Activated CD4-positive, alpha-beta memory T cell treated with anti-CD3 and anti-CD28 coated beads for 36 hours (primary cell): ENCODE measurements at regions of chr16 and their contacts with region 1.

Region 1: DNA sequence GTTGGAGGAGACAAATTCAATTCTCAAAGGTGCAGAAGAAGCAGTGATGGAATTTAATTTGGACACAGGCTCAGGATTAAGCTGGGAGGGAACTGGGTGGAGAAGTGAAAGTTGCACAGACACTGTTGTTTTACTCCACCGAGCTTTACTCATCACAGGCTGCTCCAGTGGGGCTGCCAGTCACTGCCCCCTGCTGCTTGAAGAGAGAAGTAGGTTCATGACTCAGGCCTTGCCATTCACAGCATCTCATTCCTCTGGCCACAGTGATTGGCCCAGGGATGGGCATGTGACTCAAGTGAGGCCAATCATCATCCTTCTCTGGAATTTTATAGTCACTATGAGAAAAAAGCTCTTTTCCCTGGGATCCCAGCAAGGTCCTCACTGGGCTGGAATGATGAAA is 11.8 kb downstream of the GNAO1 start:
- DNase-seq: peak; percentile 80
- H3K4me3 Mint-ChIP-seq: no peak overlapping the region
- H3K27ac Mint-ChIP-seq: no peak overlapping the region
- H3K4me1 Mint-ChIP-seq: no peaks in the 10 kb centered on the region
- H3K27me3 Mint-ChIP-seq: no peaks in the 10 kb centered on the region

Region 2: GRCh38 chr16:55756963-55757362 is 446.1 kb before region 1 on chr16:
- CTCF ChIA-PET with region 1: no interaction called
- POLR2A ChIA-PET with region 1: no interaction called
- intact Hi-C with region 1: loop called (anchors 2 kb)
- DNase-seq: no peak
- H3K4me3 Mint-ChIP-seq: no peak overlapping the region
- H3K27ac Mint-ChIP-seq: no peak overlapping the region
- H3K4me1 Mint-ChIP-seq: peaks cover 25% of the 10 kb centered on the region
- H3K27me3 Mint-ChIP-seq: peaks cover 10% of the 10 kb centered on the region

Region 3: GRCh38 chr16:56041686-56042085 is 161.4 kb before region 1 on chr16:
- CTCF ChIA-PET with region 1: interaction called, 12 read pairs
- POLR2A ChIA-PET with region 1: no interaction called
- intact Hi-C with region 1: loop called (anchors 2 kb)
- DNase-seq: peak; percentile 41
- H3K4me3 Mint-ChIP-seq: no peak overlapping the region
- H3K27ac Mint-ChIP-seq: no peak overlapping the region
- H3K4me1 Mint-ChIP-seq: no peaks in the 10 kb centered on the region
- H3K27me3 Mint-ChIP-seq: peaks cover 1% of the 10 kb centered on the region

Region 4: GRCh38 chr16:56191156-56191815 is 11.8 kb before region 1 on chr16 and contains the start of gene GNAO1:
- CTCF ChIA-PET with region 1: interaction called, 10 read pairs
- POLR2A ChIA-PET with region 1: interaction called, 3 read pairs
- intact Hi-C with region 1: loop called (anchors 1 kb)
- DNase-seq: peak; percentile 65
- H3K4me3 Mint-ChIP-seq: peak within 1 kb of the TSS; percentile 69
- H3K27ac Mint-ChIP-seq: no peak within 1 kb of the TSS
- H3K4me1 Mint-ChIP-seq: peaks cover 32% of the 10 kb centered on the region
- H3K27me3 Mint-ChIP-seq: peaks cover 52% of the 10 kb centered on the region
- total RNA-seq, gene GNAO1: 1.3 to 1.4 TPM

Region 5: GRCh38 chr16:56317998-56318826 is 115.2 kb after region 1 on chr16:
- CTCF ChIA-PET with region 1: interaction called, 8 read pairs
- POLR2A ChIA-PET with region 1: no interaction called
- intact Hi-C with region 1: loop called (anchors 2 kb)
- DNase-seq: peak; percentile 87
- H3K4me3 Mint-ChIP-seq: no peak overlapping the region
- H3K27ac Mint-ChIP-seq: no peak overlapping the region
- H3K4me1 Mint-ChIP-seq: peaks cover 3% of the 10 kb centered on the region
- H3K27me3 Mint-ChIP-seq: no peaks in the 10 kb centered on the region

Region 6: GRCh38 chr16:56460101-56460500 is 257.0 kb after region 1 on chr16:
- CTCF ChIA-PET with region 1: no interaction called
- POLR2A ChIA-PET with region 1: no interaction called
- intact Hi-C with region 1: no loop called
- DNase-seq: no peak
- H3K4me3 Mint-ChIP-seq: no peak overlapping the region
- H3K27ac Mint-ChIP-seq: no peak overlapping the region
- H3K4me1 Mint-ChIP-seq: peaks cover 9% of the 10 kb centered on the region
- H3K27me3 Mint-ChIP-seq: no peaks in the 10 kb centered on the region

Region 7: DNA sequence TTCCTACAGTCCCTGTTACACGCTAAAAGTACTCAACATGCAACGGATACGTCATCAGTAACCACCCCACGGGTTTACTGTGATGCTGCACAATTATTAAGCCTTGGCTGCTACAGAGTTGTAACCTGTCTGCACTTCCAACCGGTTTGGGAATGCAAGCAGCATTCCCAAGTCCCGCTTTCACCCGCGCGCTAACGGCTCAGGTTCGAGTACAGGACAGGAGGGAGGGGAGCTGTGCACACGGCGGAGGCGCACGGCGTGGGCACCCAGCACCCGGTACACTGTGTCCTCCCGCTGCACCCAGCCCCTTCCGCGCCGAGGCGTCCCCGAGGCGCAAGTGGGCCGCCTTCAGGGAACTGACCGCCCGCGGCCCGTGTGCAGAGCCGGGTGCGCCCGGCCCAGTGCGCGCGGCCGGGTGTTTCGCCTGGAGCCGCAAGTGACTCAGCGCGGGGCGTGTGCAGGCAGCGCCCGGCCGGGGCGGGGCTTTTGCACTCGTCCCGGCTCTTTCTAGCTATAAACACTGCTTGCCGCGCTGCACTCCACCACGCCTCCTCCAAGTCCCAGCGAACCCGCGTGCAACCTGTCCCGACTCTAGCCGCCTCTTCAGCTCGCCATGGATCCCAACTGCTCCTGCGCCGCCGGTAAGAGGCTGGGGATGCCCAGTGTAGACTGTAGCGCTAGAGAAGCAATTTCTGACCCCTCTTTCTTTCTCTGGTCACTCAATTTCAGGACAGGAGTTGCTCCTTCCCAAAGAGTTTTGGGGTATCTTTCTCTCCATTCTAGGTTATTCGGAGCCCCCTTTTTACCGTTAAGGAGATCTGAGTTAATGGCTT is 405.2 kb after region 1 on chr16 and contains the start of gene MT2A:
- CTCF ChIA-PET with region 1: no interaction called
- POLR2A ChIA-PET with region 1: no interaction called
- intact Hi-C with region 1: loop called (anchors 5 kb)
- DNase-seq: peak; percentile 95
- H3K4me3 Mint-ChIP-seq: peak within 1 kb of the TSS; percentile 81
- H3K27ac Mint-ChIP-seq: peak within 1 kb of the TSS; percentile 79
- H3K4me1 Mint-ChIP-seq: peaks cover 57% of the 10 kb centered on the region
- H3K27me3 Mint-ChIP-seq: no peaks in the 10 kb centered on the region
- total RNA-seq, gene MT2A: 102 to 105 TPM